ENCODE measurements at regions of chr15 and their contacts with region 1.

Region 1: DNA sequence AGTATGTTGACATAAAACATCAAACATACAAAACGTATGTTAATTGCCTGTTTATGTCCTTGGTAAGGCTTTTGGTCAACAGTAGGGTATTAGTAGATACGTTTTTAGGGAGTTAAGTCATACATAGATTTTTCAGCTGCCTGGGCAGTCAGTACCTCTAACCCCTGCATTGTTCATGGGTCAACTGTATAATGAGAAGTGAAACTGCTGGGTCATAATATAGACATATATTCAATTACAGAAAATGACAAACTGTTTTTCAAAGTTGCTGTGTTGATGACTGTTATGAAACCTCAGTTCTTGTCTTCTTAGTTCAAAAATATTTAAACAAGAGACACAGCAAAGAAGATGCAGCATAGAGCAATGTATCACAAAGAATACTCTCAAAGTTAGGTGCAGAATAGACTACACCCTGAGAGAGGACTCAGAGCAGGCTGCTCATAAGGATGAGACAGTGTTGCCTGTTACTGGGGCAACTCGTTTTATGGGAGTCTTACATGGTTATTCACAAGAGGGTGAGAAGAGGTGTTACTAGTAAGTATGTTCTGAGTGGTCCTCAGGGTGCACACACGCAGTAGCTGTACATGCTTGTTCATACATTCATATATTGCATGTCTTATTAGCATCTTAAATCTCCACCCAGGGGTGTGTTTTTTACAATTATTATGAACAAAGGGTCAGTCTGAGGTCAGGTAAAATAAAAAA is 53.1 kb upstream of the ADAMTS17 start:
- DNase-seq: no peak
- ATAC-seq: no peak
- H3K4me3 ChIP-seq: no peak overlapping the region
- H3K27ac ChIP-seq: no peak overlapping the region
- H3K4me1 ChIP-seq: no peaks in the 10 kb centered on the region
- H3K27me3 ChIP-seq: no peaks in the 10 kb centered on the region
- CTCF ChIP-seq: no peak
- POLR2A ChIP-seq: no peak
- RAD21 ChIP-seq: no peak

Region 2: DNA sequence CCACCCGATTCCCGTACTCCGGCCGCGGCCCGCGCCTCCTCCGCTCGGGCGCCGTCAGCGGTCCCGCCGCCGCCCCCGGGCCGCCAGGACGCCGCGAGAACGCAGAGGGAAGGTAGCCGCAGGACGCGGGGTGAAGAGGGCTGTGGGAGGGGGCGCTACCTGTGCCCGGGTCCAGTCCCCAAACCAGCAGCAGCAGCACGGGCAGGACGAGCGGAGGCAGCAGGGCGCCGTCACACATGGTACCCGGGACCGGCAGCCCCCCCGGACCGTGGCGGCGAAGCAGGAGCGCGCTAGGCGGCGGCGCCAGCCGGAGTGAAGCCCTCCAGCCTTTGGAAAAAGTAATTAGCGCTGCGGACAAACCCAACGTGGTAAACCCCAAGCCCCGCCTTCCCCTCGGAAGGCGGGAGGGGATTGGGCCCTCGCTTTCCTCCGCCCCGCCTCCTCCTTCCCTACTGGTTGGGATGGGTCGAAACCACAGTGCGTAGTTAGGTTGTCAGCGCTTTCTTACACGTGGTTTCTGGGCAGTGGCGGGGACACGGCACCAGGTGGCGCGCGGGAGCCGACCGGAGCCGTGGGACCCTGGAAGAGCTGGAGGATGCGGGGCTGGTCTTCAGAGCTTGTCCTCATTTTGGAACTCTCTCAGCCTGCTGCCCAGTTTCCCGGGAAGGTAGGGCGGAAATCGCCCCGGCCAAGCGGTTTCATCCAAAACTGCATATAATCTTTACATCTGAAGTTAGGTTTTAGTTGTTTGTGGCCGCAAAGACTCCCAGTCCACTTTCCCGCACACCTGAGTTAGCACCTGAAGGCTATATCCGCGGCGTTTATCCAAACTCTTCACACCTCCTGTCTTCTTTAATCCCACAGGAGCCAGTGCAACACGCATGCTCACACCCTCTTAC is 53.0 kb before region 1 on chr15 and contains the start of gene ADAMTS17:
- CTCF ChIA-PET with region 1: no interaction called
- POLR2A ChIA-PET with region 1: no interaction called
- dilution Hi-C with region 1: no loop called
- in situ Hi-C with region 1: no loop called
- intact Hi-C with region 1: no loop called
- DNase-seq: peak; percentile 39
- ATAC-seq: peak; percentile 75
- H3K4me3 ChIP-seq: no peak within 1 kb of the TSS
- H3K27ac ChIP-seq: no peak within 1 kb of the TSS
- H3K4me1 ChIP-seq: no peaks in the 10 kb centered on the region
- H3K27me3 ChIP-seq: peaks cover 8% of the 10 kb centered on the region
- CTCF ChIP-seq: peak; percentile 59
- POLR2A ChIP-seq: no peak
- RAD21 ChIP-seq: peak; percentile 40
- total RNA-seq, gene ADAMTS17: 0.28 TPM in 1 of 2 replicates, not detected in the other

Region 3: GRCh38 chr15:100457201-100457600 is 62.3 kb after region 1 on chr15:
- CTCF ChIA-PET with region 1: no interaction called
- POLR2A ChIA-PET with region 1: no interaction called
- dilution Hi-C with region 1: no loop called
- in situ Hi-C with region 1: no loop called
- intact Hi-C with region 1: loop called (anchors 10 kb)
- DNase-seq: peak; percentile 21
- ATAC-seq: no peak
- H3K4me3 ChIP-seq: no peak overlapping the region
- H3K27ac ChIP-seq: no peak overlapping the region
- H3K4me1 ChIP-seq: no peaks in the 10 kb centered on the region
- H3K27me3 ChIP-seq: no peaks in the 10 kb centered on the region
- CTCF ChIP-seq: no peak
- POLR2A ChIP-seq: no peak
- RAD21 ChIP-seq: no peak